Heart right ventricle (tissue), 16 donors: ENCODE measurements at regions of chr11 and their contacts with region 1.

Region 1: DNA sequence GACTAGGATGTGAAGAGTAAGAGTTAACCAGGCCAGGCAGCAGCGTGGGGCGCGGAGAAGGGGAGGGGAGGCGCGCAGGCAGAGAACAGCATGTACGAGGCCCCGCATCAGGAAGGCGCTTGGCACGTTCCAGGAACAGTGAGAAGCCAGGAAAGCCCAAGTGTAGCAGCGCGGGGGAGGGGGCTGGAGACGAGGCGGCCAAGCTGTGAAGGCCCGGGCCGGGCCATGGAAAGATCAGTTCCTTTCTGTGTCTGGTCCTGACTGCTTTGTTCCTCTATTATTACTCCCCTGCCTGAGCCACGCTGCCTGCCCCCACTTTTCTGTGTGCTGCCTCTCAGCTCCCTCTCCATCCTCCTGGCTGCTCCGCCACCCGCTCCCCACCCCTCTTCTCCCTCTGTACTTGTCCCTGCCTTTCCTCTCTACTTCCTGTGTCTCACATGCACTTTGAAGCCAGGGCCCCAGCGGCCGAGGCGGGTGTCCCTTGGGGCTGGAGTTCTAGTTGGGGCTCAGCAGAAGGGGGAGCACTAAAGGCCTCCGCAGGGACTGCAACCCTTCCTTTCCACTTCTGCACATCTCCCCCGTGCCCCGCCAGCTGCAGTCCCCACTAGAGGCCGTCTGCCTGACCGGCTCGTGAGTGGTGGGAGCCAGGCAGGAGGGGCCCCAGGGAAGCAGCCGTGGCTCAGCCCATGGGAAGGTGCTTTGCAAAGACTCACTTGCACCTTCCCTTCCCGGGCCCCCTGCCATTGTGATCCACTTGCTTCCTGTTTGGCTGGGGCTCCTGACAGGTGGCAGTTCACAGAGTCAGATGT is 63.7 kb downstream of the PRDM11 start:
- DNase-seq: peak; percentile 84 to 89
- ATAC-seq: peak; percentile 82 to 97 (median 94)
- H3K4me3 ChIP-seq: peak overlapping the region in 7 of 10 donors; percentile 2 to 33 (median 25)
- H3K27ac ChIP-seq: peak overlapping the region; percentile 64 to 92 (median 80)
- H3K4me1 ChIP-seq: peaks cover 20 to 41% (median 34%) of the 10 kb centered on the region in 9 donors
- H3K27me3 ChIP-seq: no peaks in the 10 kb centered on the region
- CTCF ChIP-seq: peak in 2 of 9 donors; percentile 8 to 15

Region 2: DNA sequence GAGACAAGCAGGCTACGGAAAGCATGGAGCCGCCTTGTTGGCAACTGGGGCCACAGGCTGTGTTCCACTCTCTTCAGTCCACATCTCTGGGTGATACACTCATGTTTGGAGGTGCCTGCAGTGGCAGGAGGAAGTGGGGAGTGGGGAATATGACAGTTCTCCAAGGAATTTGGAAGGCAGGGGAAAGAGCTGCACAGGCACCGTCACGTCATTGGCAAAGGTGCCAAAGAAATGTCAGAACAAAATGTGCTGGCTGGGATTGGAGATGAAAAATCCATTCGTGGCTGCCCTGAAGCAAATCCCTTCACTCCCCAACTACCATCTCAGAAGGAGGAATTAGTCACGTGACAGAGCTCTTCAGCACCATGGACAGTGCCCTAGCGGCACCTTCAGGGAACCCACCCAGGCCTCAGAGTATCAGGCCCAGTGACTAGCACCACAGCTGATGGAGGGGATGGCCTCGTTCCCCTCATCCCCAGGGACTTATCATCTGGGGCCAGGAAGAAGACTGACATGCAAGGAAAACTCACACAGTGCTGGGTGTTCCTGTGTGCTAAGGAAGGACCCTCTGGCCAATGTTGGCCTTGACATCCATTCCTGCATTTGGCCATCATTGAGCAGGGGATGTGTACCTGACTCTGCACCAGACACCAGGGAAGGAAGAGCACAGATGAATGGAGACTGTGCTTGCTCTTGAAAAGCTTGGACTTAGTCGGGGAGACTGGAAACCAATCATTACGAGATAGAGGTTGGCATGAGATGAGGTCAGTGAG is 112.2 kb before region 1 on chr11:
- intact Hi-C with region 1: no loop called
- DNase-seq: peak; percentile 61 to 76
- ATAC-seq: peak in 7 of 8 donors; percentile 31 to 72 (median 58)
- H3K4me3 ChIP-seq: no peak overlapping the region
- H3K27ac ChIP-seq: no peak overlapping the region
- H3K4me1 ChIP-seq: peaks cover 0 to 20% (median 8%) of the 10 kb centered on the region in 9 donors
- H3K27me3 ChIP-seq: peaks cover 0 to 7% (median 0%) of the 10 kb centered on the region in 7 donors
- CTCF ChIP-seq: no peak

Region 3: DNA sequence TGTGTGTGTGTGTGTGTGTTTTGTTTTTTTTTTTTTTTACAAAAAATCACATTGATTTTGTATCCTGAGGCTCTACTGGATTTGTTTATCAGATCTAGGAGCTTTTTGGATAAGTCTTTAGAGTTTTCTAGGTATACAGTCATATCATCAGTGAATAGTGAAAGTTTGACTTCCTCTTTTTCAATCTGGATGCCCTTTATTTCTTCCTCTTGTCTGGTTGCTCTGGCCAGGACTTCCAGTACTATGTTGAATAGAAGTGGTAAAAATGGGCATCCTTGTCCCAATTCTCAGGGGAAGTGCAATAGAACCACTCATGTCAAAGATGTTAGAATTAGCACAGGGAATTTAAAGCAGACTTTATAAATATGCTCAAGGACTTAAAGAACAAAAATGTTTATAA is 96.3 kb before region 1 on chr11:
- intact Hi-C with region 1: no loop called
- DNase-seq: no peak
- ATAC-seq: no peak
- H3K4me3 ChIP-seq: no peak overlapping the region
- H3K27ac ChIP-seq: no peak overlapping the region
- H3K4me1 ChIP-seq: no peaks in the 10 kb centered on the region
- H3K27me3 ChIP-seq: peaks cover 0 to 48% (median 24%) of the 10 kb centered on the region in 7 donors
- CTCF ChIP-seq: no peak

Region 4: DNA sequence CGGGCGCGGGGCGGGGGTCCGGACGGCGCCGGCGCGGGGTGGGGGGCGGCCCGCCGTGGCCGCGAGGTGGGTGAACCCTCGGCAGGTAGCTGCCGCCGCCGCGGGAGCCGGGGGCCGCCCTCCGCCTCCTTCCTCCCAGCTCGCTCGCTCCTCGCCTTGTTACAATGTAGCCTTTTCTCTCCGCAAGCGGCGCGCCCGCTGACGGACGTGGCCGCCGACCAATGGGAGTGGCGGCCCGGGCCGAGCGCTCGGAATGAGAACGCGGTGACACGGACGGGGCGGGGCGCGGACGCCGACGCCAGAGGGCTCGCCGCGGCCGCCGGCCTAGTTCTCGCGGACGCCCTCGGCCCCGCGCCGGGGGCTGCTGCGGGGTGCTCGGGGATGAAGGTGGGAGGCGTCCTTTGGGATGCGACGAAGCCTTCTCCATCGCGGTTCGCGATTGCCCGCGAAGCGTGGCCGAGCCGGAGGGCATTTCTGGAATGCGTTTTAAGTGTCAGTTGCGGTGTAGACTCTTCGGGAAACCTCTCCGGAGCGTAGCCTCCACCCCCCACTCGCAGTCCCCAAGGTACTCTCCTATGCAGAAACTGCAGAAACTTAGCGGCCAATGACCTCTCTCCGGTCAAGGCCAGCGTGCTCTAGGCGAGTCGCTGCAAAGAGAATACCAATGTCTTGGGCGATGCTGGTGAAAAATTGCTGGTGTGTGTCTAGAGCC is 62.9 kb before region 1 on chr11:
- intact Hi-C with region 1: loop called in 3 of 10 experiments (anchors 1 to 5 kb)
- DNase-seq: peak; percentile 94 to 96
- ATAC-seq: peak; percentile 94 to 99 (median 98)
- H3K4me3 ChIP-seq: peak overlapping the region; percentile 49 to 96 (median 76)
- H3K27ac ChIP-seq: peak overlapping the region; percentile 94 to 100 (median 99)
- H3K4me1 ChIP-seq: peaks cover 6 to 39% (median 22%) of the 10 kb centered on the region in 9 donors
- H3K27me3 ChIP-seq: peaks cover 0 to 16% (median 0%) of the 10 kb centered on the region in 7 donors
- CTCF ChIP-seq: peak in 4 of 9 donors; percentile 8 to 48 (median 38)

Region 5: GRCh38 chr11:45180179-45180842 is 29.8 kb before region 1 on chr11:
- intact Hi-C with region 1: loop called in 1 of 10 experiments (anchors 2 kb)
- DNase-seq: peak in 1 of 2 donors; percentile 67
- ATAC-seq: peak; percentile 56 to 80 (median 69)
- H3K4me3 ChIP-seq: peak overlapping the region; percentile 31 to 68 (median 54)
- H3K27ac ChIP-seq: peak overlapping the region; percentile 81 to 91 (median 88)
- H3K4me1 ChIP-seq: peaks cover 15 to 52% (median 26%) of the 10 kb centered on the region in 9 donors
- H3K27me3 ChIP-seq: peaks cover 0 to 20% (median 0%) of the 10 kb centered on the region in 7 donors
- CTCF ChIP-seq: peak in 8 of 9 donors; percentile 26 to 66 (median 46)

Region 6: GRCh38 chr11:45193695-45194094 is 16.4 kb before region 1 on chr11:
- intact Hi-C with region 1: loop called in 1 of 10 experiments (anchors 2 kb)
- DNase-seq: peak in 1 of 2 donors; percentile 41
- ATAC-seq: peak; percentile 50 to 87 (median 78)
- H3K4me3 ChIP-seq: no peak overlapping the region
- H3K27ac ChIP-seq: peak overlapping the region in 3 of 10 donors; percentile 16 to 34 (median 30)
- H3K4me1 ChIP-seq: peaks cover 0 to 12% (median 6%) of the 10 kb centered on the region in 9 donors
- H3K27me3 ChIP-seq: no peaks in the 10 kb centered on the region
- CTCF ChIP-seq: no peak

Region 7: DNA sequence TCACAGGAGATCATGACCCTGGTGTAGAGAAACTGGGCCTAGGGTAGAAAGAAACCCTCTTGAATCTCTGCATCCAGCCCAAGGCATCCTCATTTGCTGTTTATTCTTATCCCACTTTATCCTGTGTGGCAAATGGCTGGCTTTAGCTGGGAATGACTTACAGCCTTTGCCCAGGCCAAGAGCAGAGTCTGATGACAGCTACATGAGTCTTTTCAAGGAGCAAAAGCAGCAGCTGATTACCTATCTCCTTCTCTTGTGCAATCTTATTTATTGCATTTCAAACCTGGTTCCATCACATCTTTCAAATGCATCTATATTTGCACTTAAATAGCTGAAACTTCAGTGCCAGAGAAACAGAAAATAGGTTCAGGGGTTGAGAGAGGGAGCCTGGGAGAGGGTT is 50.0 kb after region 1 on chr11:
- intact Hi-C with region 1: loop called in 1 of 10 experiments (anchors 1 kb)
- DNase-seq: no peak
- ATAC-seq: no peak
- H3K4me3 ChIP-seq: no peak overlapping the region
- H3K27ac ChIP-seq: no peak overlapping the region
- H3K4me1 ChIP-seq: no peaks in the 10 kb centered on the region
- H3K27me3 ChIP-seq: peaks cover 0 to 45% (median 34%) of the 10 kb centered on the region in 7 donors
- CTCF ChIP-seq: no peak

Region 8: GRCh38 chr11:45278714-45279113 is 68.6 kb after region 1 on chr11:
- intact Hi-C with region 1: loop called in 1 of 10 experiments (anchors 10 kb)
- DNase-seq: no peak
- ATAC-seq: no peak
- H3K4me3 ChIP-seq: no peak overlapping the region
- H3K27ac ChIP-seq: no peak overlapping the region
- H3K4me1 ChIP-seq: no peaks in the 10 kb centered on the region
- H3K27me3 ChIP-seq: peaks cover 0 to 52% (median 27%) of the 10 kb centered on the region in 7 donors
- CTCF ChIP-seq: no peak

Region 9: GRCh38 chr11:45285930-45286632 is 76.0 kb after region 1 on chr11 and contains the start of gene SYT13:
- intact Hi-C with region 1: loop called in 1 of 10 experiments (anchors 2 kb)
- DNase-seq: peak; percentile 11 to 45
- ATAC-seq: peak in 6 of 8 donors; percentile 64 to 88 (median 68)
- H3K4me3 ChIP-seq: peak within 1 kb of the TSS in 8 of 10 donors; percentile 10 to 35 (median 23)
- H3K27ac ChIP-seq: no peak within 1 kb of the TSS
- H3K4me1 ChIP-seq: peaks cover 0 to 7% (median 5%) of the 10 kb centered on the region in 9 donors
- H3K27me3 ChIP-seq: peaks cover 4 to 90% (median 78%) of the 10 kb centered on the region in 7 donors
- CTCF ChIP-seq: no peak
- total RNA-seq, gene SYT13: 0.93 to 7.7 (median 2.6) TPM